GM12878 (cell line): ENCODE measurements at regions of chr14 and their contacts with region 1.

Region 1: GRCh38 chr14:74278080-74278479 is 24.7 kb downstream of the ABCD4 start:
- DNase-seq: no peak
- ATAC-seq: no peak
- H3K4me3 ChIP-seq: no peak overlapping the region
- H3K27ac ChIP-seq: no peak overlapping the region
- H3K4me1 ChIP-seq: no peaks in the 10 kb centered on the region
- H3K27me3 ChIP-seq: no peaks in the 10 kb centered on the region
- CTCF ChIP-seq: no peak
- EP300 ChIP-seq: no peak
- POLR2A ChIP-seq: no peak
- RAD21 ChIP-seq: no peak

Region 2: GRCh38 chr14:74127634-74128033 is 150.4 kb before region 1 on chr14:
- CTCF ChIA-PET with region 1: no interaction called
- POLR2A ChIA-PET with region 1: no interaction called
- RAD21 ChIA-PET with region 1: no interaction called
- SMC1A ChIA-PET with region 1: no interaction called
- in situ Hi-C with region 1: no loop called
- intact Hi-C with region 1: no loop called
- DNase-seq: no peak
- ATAC-seq: no peak
- H3K4me3 ChIP-seq: no peak overlapping the region
- H3K27ac ChIP-seq: no peak overlapping the region
- H3K4me1 ChIP-seq: no peaks in the 10 kb centered on the region
- H3K27me3 ChIP-seq: no peaks in the 10 kb centered on the region
- CTCF ChIP-seq: no peak
- EP300 ChIP-seq: no peak
- POLR2A ChIP-seq: no peak
- RAD21 ChIP-seq: no peak

Region 3: DNA sequence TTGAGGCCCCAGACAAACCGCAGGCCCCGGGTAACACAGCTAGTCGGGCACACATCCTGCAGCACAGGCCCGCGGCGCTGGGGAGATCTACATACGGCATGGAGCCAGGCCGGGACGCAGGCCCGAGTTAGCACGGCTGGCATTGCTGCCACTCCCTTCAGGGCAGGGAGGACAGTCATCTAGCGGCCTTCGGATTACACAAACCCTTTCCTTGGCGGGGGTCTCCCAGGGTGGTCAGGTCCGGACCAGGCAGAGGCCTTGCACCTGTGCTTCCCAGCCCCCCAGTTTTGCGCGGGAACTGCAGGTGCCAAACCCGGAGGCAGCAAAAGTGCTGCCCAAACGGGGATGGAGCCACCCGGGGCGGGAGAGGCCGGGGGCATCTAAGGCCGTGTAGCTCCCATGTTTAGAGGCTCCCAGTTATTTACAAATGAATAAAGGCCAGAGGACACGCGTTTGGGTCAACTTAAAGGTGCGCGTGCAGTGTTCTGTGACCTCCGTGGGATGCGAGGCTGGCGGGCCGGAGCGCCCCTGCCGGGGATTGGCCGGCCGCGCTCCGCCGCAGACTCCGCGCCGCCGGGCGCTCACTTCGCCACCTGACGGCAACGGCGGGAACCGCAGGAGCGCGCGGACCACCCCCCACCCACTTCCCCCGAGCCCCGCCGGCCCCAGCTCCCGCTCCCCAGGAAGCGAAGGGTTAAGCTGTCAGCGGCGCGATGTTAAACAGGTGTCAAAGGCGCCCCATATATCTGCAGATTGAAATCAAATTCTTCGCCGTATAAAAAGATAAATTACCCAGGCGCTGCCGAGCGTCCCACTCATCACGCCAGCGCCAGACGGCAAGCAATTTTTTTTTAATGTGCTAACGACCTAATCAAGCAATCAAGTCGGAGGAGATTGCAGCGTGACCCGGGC is 20.7 kb before region 1 on chr14:
- CTCF ChIA-PET with region 1: interaction called, 13 read pairs
- POLR2A ChIA-PET with region 1: no interaction called
- RAD21 ChIA-PET with region 1: no interaction called
- SMC1A ChIA-PET with region 1: no interaction called
- in situ Hi-C with region 1: no loop called
- intact Hi-C with region 1: no loop called
- DNase-seq: no peak
- ATAC-seq: peak; percentile 96
- H3K4me3 ChIP-seq: peak overlapping the region; percentile 68
- H3K27ac ChIP-seq: no peak overlapping the region
- H3K4me1 ChIP-seq: peaks cover 6% of the 10 kb centered on the region
- H3K27me3 ChIP-seq: peaks cover 3 to 4% of the 10 kb centered on the region in 2 experiments; a peak in 3 of 4 replicates
- CTCF ChIP-seq: peak; percentile 81 to 88 (median 85)
- EP300 ChIP-seq: no peak
- POLR2A ChIP-seq: no peak
- RAD21 ChIP-seq: peak; percentile 37; the same call in 1 of the 2 replicates